ENCODE measurements at regions of chr2 and their contacts with region 1.

Region 1: GRCh38 chr2:20611077-20611843 is 39.6 kb downstream of the HS1BP3 start:
- DNase-seq: no peak
- H3K4me3 ChIP-seq: no peak overlapping the region
- H3K27ac ChIP-seq: no peak overlapping the region
- H3K4me1 ChIP-seq: peaks cover 0 to 14% (median 10%) of the 10 kb centered on the region in 4 experiments; a peak in 6 of 7 replicates
- H3K27me3 ChIP-seq: no peaks in the 10 kb centered on the region; a peak in 1 of 7 replicates
- CTCF ChIP-seq: no peak
- EP300 ChIP-seq: no peak
- POLR2A ChIP-seq: no peak
- RAD21 ChIP-seq: no peak

Region 2: DNA sequence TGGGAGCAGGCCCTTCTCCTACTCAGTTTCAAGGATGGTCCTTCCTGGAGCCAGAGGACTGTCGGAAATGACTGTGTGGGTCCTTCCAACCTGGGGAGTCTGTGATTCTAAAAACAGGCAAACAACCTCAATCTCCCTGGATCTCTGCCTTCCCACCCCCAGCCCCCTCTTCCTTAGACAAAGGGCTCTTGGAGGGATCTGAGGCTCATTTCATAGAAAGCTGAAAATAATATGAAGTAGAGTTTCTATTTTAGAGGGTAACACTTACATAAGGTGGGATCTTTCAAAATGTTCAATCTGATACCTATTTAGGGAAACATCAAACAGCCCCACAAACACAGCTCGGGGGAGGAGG is 95.0 kb before region 1 on chr2:
- CTCF ChIA-PET with region 1: no interaction called
- POLR2A ChIA-PET with region 1: no interaction called
- DNase-seq: no peak
- H3K4me3 ChIP-seq: no peak overlapping the region
- H3K27ac ChIP-seq: no peak overlapping the region
- H3K4me1 ChIP-seq: peaks cover 0 to 1% (median 0%) of the 10 kb centered on the region in 4 experiments; a peak in 1 of 7 replicates
- H3K27me3 ChIP-seq: no peaks in the 10 kb centered on the region
- CTCF ChIP-seq: no peak
- EP300 ChIP-seq: no peak
- POLR2A ChIP-seq: no peak
- RAD21 ChIP-seq: no peak

Region 3: GRCh38 chr2:20572221-20572620 is 39.0 kb before region 1 on chr2:
- CTCF ChIA-PET with region 1: no interaction called
- POLR2A ChIA-PET with region 1: no interaction called
- DNase-seq: no peak
- H3K4me3 ChIP-seq: no peak overlapping the region
- H3K27ac ChIP-seq: no peak overlapping the region
- H3K4me1 ChIP-seq: peaks cover 4 to 7% (median 6%) of the 10 kb centered on the region in 4 experiments; a peak in 6 of 7 replicates
- H3K27me3 ChIP-seq: no peaks in the 10 kb centered on the region; a peak in 2 of 7 replicates
- CTCF ChIP-seq: no peak
- EP300 ChIP-seq: no peak
- POLR2A ChIP-seq: no peak
- RAD21 ChIP-seq: no peak

Region 4: DNA sequence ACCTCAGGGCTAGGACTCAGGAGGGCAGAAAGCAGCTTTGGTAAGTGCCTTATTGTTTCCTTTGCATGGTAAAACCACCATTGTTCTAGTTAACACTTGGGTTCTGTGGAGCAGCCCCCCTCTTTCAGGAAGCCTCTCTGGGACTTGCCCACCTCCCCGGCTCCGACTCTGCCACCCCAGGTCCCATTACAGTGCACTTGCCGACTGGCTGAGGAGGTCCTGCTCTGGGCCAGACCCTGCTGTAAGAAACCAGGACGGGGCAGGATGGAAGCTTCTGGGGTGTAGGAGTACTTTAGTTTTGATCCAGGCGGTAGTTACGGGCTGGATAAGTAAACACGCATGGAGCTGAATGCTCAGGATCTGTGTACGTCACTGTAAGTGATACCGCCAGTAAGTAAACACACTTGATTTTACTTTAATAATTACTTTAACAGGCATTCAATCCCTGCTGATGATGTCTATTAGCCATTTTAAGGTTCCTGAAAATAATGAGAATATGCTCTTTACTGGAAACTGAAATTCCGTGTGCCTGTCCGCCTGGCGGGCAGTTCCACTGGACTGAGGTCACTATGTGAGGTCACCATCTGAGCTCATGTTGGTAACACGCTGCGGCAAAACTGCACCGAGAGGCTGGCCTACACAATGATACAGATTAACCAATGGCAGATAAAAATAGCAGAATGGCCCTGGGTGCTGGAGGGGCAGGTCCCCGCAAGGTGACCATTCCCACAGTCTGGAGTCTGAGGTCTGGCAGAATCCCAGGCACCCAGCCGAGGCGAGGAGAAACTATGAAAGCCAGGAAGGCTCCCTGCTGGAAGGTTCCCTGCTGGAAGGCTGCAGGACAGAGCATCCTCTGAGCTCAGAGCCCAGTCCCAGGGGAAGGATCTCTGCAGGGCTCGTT is 14.5 kb after region 1 on chr2:
- CTCF ChIA-PET with region 1: interaction called, 82 read pairs
- POLR2A ChIA-PET with region 1: interaction called, 3 read pairs
- DNase-seq: no peak
- H3K4me3 ChIP-seq: no peak overlapping the region
- H3K27ac ChIP-seq: no peak overlapping the region
- H3K4me1 ChIP-seq: no peaks in the 10 kb centered on the region
- H3K27me3 ChIP-seq: no peaks in the 10 kb centered on the region
- CTCF ChIP-seq: no peak
- EP300 ChIP-seq: no peak
- POLR2A ChIP-seq: no peak
- RAD21 ChIP-seq: no peak